ENCODE measurements at regions of chrX and their contacts with region 1.

Region 1: DNA sequence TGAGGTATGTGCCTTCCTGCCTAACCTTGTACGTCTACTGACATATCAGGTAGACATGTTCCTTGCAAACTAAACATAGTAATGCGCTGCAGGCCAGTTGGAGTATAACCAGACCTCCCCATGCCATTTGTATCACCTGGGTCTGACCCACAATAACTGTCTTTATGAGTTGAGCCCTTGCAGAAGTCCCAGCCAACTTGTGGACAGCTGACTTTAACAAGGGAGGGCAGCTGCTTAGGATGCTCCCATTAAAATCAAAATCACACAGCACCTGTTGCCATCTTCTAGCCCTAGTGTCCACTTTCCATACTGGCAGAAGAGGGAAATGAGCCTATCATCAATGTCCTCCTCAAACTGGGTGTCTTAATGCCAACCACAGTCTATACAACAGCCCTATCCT is 41.6 kb downstream of the KANTR start:
- DNase-seq: no peak
- H3K4me3 ChIP-seq: no peak overlapping the region
- H3K27ac ChIP-seq: no peak overlapping the region
- H3K4me1 ChIP-seq: no peaks in the 10 kb centered on the region
- H3K27me3 ChIP-seq: peaks cover 0 to 5% of the 10 kb centered on the region in 2 donors
- CTCF ChIP-seq: no peak
- POLR2A ChIP-seq: no peak

Region 2: DNA sequence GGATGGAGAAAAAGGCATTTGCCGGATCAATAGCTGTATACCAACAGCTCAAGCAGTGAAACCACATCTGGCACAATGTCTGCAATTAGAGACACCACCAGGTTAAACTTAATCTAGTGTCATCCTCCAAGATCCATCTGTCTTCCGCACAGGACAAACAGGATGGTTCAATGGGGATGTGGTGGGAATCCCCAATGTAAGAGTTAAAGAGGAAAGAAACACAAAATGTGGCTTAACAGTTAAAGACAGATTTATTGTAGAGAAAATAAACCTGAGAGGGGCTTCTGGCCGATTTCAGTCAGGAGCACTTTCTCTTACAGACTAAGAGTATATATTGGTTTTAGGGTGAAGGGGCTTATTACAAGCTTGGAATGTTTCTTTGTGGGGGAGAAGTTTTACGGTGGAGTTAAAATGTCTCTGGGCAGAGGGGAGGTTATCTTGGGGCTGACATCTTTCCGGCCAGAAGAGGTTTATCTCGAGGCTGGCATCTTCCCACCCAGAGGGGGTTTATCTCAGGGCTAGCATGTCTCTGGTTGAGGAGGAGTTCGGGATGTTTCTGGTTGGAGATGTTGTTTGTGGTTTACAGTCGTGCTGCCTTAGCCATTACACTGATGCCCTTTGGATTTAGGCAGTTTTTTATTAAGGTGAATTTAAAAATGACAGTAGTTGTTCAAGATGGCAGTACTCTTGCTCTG is 20.1 kb after region 1 on chrX:
- intact Hi-C with region 1: loop called (anchors 1 kb)
- DNase-seq: no peak
- H3K4me3 ChIP-seq: no peak overlapping the region
- H3K27ac ChIP-seq: no peak overlapping the region
- H3K4me1 ChIP-seq: no peaks in the 10 kb centered on the region
- H3K27me3 ChIP-seq: no peaks in the 10 kb centered on the region
- CTCF ChIP-seq: no peak
- POLR2A ChIP-seq: no peak

Measured in breast epithelium (tissue), 4 donors.